HepG2 (cell line): ENCODE measurements at regions of chr15 and their contacts with region 1.

Region 1: DNA sequence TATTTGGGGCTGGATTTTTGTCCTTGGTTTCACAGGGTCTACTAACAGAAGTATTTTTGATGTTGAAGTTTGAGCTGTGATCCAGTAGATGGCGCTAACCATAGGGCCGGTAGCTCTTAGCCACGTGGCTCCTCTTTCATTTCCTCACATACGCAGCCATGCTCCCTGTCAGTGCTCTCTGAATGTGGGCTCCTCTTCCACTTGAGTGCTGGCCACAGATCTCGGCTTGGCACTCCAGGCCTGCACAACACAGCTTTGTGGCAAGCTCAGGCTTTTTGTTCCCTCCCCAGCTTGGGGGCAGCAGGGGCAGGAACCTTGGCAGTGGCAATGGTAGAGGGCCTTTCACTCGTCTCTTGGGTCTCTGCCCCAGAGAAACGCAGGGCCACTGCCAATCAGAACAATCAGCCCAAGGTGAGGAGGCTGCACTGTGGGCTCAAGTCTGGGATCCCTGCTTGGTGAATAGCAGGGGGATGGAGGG is 18.6 kb upstream of the DNAAF4 start:
- DNase-seq: peak; percentile 63
- ATAC-seq: peak; percentile 94
- H3K4me3 ChIP-seq: peak overlapping the region; percentile 27 to 49 (median 28); a peak in 4 of 6 replicates
- H3K27ac ChIP-seq: no peak overlapping the region
- H3K4me1 ChIP-seq: peaks cover 12% of the 10 kb centered on the region
- H3K27me3 ChIP-seq: no peaks in the 10 kb centered on the region; a peak in 1 of 5 replicates
- CTCF ChIP-seq: peak; percentile 81
- EP300 ChIP-seq: no peak
- POLR2A ChIP-seq: no peak
- RAD21 ChIP-seq: no peak; the same call in 1 of the 2 replicates

Region 2: DNA sequence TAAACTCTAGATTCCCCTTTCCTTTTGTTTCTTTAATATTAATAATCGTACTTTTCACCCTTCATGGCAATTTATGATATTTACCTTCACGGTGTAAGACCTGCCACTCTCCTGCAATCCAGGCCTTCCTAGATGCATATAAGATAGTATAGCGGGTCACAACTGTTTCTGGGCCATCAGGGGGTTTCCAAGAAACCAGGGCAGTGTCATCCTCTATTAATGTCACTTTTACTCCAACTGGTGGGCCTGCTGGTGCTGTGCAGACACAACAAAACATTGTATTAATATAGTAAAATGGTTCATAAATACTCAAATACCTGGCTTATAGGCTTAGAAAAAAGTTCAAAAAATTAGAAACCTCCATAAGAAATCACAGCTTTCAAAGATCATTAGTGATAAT is 110.5 kb after region 1 on chr15:
- CTCF ChIA-PET with region 1: interaction called, 12 read pairs
- POLR2A ChIA-PET with region 1: no interaction called
- in situ Hi-C with region 1: loop called (anchors 5 kb)
- intact Hi-C with region 1: loop called (anchors 1 kb)
- DNase-seq: no peak
- ATAC-seq: no peak
- H3K4me3 ChIP-seq: no peak overlapping the region
- H3K27ac ChIP-seq: no peak overlapping the region
- H3K4me1 ChIP-seq: no peaks in the 10 kb centered on the region
- H3K27me3 ChIP-seq: no peaks in the 10 kb centered on the region
- CTCF ChIP-seq: no peak
- EP300 ChIP-seq: no peak
- POLR2A ChIP-seq: no peak
- RAD21 ChIP-seq: no peak

Region 3: GRCh38 chr15:55649054-55649423 is 122.4 kb after region 1 on chr15:
- CTCF ChIA-PET with region 1: no interaction called
- POLR2A ChIA-PET with region 1: no interaction called
- in situ Hi-C with region 1: loop called (anchors 5 kb)
- intact Hi-C with region 1: no loop called
- DNase-seq: no peak
- ATAC-seq: no peak
- H3K4me3 ChIP-seq: no peak overlapping the region
- H3K27ac ChIP-seq: no peak overlapping the region
- H3K4me1 ChIP-seq: no peaks in the 10 kb centered on the region
- H3K27me3 ChIP-seq: no peaks in the 10 kb centered on the region
- CTCF ChIP-seq: no peak
- EP300 ChIP-seq: no peak
- POLR2A ChIP-seq: no peak
- RAD21 ChIP-seq: no peak

Region 4: GRCh38 chr15:55799291-55800212 is 273.0 kb after region 1 on chr15:
- CTCF ChIA-PET with region 1: no interaction called
- POLR2A ChIA-PET with region 1: no interaction called
- in situ Hi-C with region 1: no loop called
- intact Hi-C with region 1: loop called (anchors 5 kb)
- DNase-seq: peak; percentile 46
- ATAC-seq: peak; percentile 73
- H3K4me3 ChIP-seq: peak overlapping the region in 2 of 3 experiments; percentile 11 to 35; a peak in 2 of 6 replicates
- H3K27ac ChIP-seq: no peak overlapping the region
- H3K4me1 ChIP-seq: no peaks in the 10 kb centered on the region
- H3K27me3 ChIP-seq: 0 out of 5 replicates have a peak, but pooled peaks cover 0 to 3% of the 10 kb centered on the region in 2 experiments
- CTCF ChIP-seq: peak; percentile 86
- EP300 ChIP-seq: no peak
- POLR2A ChIP-seq: no peak
- RAD21 ChIP-seq: peak; percentile 54; the same call in 1 of the 2 replicates

Region 5: GRCh38 chr15:55846116-55846707 is 319.6 kb after region 1 on chr15:
- CTCF ChIA-PET with region 1: no interaction called
- POLR2A ChIA-PET with region 1: no interaction called
- in situ Hi-C with region 1: no loop called
- intact Hi-C with region 1: loop called (anchors 1 kb)
- DNase-seq: peak; percentile 69
- ATAC-seq: peak; percentile 73
- H3K4me3 ChIP-seq: no peak overlapping the region
- H3K27ac ChIP-seq: no peak overlapping the region
- H3K4me1 ChIP-seq: no peaks in the 10 kb centered on the region
- H3K27me3 ChIP-seq: no peaks in the 10 kb centered on the region
- CTCF ChIP-seq: peak; percentile 76
- EP300 ChIP-seq: no peak
- POLR2A ChIP-seq: no peak
- RAD21 ChIP-seq: peak; percentile 36; the same call in 1 of the 2 replicates